ENCODE measurements at regions of chr6 and their contacts with region 1.

Region 1: DNA sequence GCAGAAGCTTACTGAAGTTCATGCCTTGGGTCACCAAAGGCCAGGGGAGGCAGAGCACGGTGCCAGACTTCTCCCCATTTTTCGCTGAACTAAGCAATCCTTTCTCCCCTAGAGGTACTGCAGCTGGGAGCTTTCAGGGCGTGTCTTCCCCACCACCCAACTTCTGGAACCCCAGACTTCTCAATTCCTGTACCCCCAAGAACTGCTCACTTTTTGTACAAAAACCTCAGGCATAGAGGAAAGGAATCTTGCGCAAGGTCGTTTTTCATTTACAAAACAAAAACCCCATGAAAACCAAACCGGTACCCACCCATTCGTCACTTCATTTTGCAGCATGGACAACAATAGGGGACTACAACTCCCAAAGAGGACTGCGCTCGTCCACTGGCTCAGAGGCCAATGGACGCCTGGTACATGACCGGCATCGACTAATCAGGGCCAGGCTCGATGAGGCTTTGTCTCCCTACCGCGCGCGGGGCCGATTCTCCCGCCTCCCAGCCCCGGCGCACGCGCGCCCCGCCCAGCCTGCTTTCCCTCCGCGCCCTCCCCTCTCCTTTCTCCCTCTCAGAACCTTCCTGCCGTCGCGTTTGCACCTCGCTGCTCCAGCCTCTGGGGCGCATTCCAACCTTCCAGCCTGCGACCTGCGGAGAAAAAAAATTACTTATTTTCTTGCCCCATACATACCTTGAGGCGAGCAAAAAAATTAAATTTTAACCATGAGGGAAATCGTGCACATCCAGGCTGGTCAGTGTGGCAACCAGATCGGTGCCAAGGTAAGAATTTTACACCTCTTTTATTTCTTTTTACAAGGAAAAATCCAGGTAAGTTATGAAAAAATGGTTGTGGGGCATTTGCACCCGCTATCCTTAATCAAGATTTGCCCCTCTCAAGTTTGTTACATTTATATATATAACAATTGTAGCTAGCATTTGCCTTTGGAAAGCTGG is at the start of gene TUBB:
- DNase-seq: peak; percentile 99
- H3K4me3 ChIP-seq: peak within 1 kb of the TSS; percentile 73 to 99
- H3K27ac ChIP-seq: peak within 1 kb of the TSS; percentile 89 to 90
- H3K4me1 ChIP-seq: peaks cover 24% of the 10 kb centered on the region
- H3K27me3 ChIP-seq: no peaks in the 10 kb centered on the region
- CTCF ChIP-seq: peak in 2 of 3 experiments; percentile 19 to 31
- POLR2A ChIP-seq: peak; percentile 83
- total RNA-seq, gene TUBB: 173 to 252 TPM

Region 2: DNA sequence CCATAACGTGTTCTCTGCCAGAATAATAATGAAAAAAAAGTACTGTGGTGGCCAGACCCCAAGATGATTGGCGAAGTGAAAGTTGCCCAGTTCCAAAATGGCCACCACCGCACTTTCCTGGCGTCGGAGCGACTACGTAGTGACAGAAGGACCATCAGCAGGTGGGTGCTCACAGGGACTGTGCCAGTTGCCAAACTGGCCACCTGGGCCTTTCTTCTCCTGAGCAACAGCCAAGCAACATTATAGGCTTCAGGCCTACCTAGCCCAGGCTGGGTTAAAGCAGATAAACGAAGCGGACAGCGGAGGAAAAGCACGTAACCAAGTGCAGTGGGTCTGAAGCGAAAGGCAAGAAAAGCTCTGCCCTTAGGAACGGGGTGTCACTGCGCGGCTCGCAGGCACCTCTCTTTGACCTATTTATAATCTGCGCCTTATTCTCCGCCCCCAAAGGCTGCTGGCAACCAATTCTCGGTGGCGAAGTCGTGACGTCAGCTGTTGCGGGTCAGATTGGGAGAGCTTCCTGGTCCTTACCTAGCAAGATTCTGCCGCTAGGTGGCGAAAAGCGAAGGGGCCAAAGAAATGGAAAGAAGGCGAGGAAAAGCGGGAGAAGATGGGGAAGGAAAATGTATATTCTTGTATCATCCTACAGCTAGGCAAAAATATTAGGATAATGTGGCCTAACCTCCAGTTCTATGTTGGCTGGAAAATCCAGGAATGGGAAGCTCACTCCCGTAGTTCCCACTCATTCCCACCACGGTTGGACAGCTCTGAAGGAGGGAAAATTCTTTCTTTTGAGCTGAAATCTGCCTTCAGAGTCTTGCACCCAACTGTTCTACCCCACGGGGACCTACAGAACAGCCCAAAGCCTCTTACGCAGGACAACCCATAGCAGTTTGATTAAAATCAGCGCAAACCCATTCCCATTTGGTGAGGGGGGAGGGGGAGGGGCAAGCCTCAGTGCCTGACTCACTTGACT is 1070.1 kb before region 1 on chr6:
- intact Hi-C with region 1: loop called (anchors 10 kb)
- DNase-seq: peak; percentile 100
- H3K4me3 ChIP-seq: peak overlapping the region; percentile 58 to 65
- H3K27ac ChIP-seq: peak overlapping the region; percentile 93 to 96
- H3K4me1 ChIP-seq: no peaks in the 10 kb centered on the region
- H3K27me3 ChIP-seq: no peaks in the 10 kb centered on the region
- CTCF ChIP-seq: peak; percentile 94 to 98 (median 97)
- POLR2A ChIP-seq: peak; percentile 84

Region 3: DNA sequence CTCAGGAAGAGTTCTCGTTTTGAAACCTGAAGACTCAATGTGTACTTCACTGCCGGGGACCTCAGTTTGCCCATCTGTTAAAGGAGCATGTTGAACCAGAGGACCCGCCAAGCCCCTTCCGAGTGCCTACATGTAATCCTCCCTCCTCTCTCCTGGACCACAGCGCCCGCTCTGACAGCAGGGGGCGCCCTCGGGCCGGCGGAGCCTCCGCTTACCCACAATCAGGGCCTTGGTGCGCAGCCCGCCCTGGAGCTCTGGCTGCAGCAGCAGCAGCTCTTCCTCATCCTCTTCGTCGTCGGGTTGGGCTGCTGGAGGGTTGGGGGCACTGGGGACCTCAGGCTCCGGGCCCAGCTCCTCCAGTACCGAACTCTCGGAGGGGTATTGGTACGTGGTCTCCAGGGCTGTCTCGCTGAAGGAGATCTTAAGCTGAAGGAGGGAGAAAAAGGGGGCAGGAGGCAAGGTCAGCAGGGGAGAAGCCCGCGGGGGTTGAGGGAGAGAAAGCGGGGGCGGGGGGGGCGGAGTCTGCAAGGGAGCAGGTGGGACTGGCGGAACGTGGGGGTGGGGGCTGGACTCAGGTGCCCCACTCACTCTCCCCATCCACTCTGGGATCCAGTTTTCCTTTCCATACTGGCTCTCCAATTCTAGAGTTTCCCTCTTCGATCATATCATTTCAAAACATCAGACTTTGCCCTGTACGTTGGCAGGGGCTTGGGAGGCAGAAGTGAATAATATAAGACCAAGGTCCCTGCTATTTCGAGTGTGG is 40.9 kb before region 1 on chr6:
- intact Hi-C with region 1: loop called (anchors 2 kb)
- DNase-seq: peak; percentile 90
- H3K4me3 ChIP-seq: peak overlapping the region in 1 of 2 donors; percentile 29
- H3K27ac ChIP-seq: no peak overlapping the region
- H3K4me1 ChIP-seq: peaks cover 13% of the 10 kb centered on the region
- H3K27me3 ChIP-seq: no peaks in the 10 kb centered on the region
- CTCF ChIP-seq: peak; percentile 91 to 95 (median 94)
- POLR2A ChIP-seq: no peak

Region 4: GRCh38 chr6:30686908-30687658 is 33.0 kb before region 1 on chr6:
- intact Hi-C with region 1: loop called (anchors 2 kb)
- DNase-seq: peak; percentile 90
- H3K4me3 ChIP-seq: peak overlapping the region; percentile 68 to 76
- H3K27ac ChIP-seq: peak overlapping the region; percentile 89 to 94
- H3K4me1 ChIP-seq: peaks cover 54% of the 10 kb centered on the region
- H3K27me3 ChIP-seq: no peaks in the 10 kb centered on the region
- CTCF ChIP-seq: no peak
- POLR2A ChIP-seq: no peak

Region 5: DNA sequence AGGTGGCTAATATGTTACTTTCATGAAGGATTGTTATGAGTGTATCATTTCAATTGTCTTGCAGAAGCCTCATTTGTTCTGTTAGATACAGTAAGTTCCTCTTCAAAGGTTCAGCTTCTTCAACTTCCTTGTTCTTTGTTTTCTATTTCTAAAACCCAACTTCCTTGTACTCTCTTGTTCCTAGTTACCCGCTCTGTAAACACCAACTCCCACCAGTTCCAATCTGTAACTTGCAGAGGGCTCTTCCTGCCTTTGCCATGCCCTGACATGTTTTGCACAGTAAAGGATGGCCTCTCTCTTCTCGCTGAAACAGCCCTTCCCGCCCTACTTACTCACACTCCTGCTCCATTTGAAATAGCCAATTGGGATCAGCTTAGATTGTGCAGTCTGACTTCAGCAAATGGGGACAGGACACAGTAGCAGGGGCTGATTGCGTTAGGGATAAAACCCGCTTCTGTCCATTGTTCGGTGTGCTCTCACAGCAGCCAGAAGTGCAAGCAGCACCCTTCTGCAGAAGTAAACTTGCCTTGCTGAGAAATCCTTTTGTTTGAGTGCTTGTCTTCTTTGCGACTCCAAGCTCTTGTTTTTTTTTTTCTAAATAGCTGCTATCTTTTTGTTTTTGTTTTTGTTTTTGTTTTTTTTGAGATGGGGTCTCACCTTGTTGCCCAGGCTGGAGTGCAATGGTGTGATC is 496.3 kb after region 1 on chr6:
- intact Hi-C with region 1: no loop called
- DNase-seq: no peak
- H3K4me3 ChIP-seq: no peak overlapping the region
- H3K27ac ChIP-seq: no peak overlapping the region
- H3K4me1 ChIP-seq: no peaks in the 10 kb centered on the region
- H3K27me3 ChIP-seq: no peaks in the 10 kb centered on the region
- CTCF ChIP-seq: no peak
- POLR2A ChIP-seq: no peak